ENCODE measurements at regions of chr14 and their contacts with region 1.

Region 1: DNA sequence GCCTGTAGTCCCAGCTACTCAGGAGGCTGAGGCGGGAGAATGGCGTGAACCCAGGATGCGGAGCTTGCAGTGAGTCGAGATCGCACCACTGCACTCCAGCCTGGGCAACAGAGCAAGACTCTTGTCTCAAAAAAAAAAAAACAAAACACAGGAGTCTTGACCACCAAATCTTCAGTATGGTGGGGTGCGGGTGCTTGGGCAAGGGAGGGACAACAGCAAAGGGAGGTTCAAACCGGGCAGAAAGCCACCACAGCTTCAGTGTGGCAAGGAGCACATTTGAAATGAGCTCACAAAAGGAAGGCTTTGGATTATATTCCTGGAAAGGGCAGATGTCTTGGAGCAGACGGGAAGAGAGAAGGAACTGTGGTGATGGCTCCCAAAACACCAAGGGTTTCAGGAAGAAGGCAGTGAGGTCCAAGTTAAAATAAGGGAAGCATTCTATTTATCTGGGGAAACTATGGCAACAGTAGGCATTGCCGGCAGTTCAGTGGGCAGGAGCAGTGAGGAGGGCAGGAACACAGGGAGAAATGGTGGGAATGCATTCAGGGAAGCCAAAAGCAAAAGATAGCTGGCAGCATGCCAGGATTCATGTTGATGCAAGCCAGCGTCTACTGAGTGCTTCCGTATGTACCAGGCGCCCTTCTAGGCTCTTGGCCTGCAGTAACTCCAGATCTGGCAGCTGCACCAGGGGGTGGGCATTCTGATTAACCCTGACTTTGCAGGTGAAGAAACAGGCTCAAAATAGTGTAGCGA is 51.0 kb upstream of the SRSF5 start:
- DNase-seq: no peak
- H3K4me3 ChIP-seq: no peak overlapping the region
- H3K27ac ChIP-seq: no peak overlapping the region
- H3K4me1 ChIP-seq: peaks cover 16 to 39% (median 31%) of the 10 kb centered on the region in 4 experiments
- H3K27me3 ChIP-seq: no peaks in the 10 kb centered on the region
- CTCF ChIP-seq: no peak
- EP300 ChIP-seq: no peak
- POLR2A ChIP-seq: no peak
- RAD21 ChIP-seq: no peak

Region 2: DNA sequence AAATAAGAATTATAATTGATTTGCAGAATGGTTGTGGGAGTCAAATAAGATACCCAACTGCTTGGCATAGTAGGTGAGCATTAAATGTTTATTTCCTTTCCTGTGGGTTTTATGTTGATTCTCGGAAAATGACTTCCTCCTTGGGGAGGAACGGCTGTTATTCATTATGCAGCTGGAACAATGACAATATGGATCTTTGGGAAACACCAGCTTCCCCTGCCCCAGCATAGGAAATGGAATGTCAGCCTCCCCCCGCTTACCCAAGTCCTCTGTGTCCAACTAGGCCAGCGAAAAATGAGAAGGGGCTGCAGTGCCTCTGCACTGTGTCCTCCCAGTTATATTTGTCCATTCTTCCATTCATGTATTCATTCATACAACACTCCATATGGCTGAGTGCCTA is 129.5 kb before region 1 on chr14:
- CTCF ChIA-PET with region 1: interaction called, 24 read pairs
- POLR2A ChIA-PET with region 1: no interaction called
- DNase-seq: no peak
- H3K4me3 ChIP-seq: no peak overlapping the region
- H3K27ac ChIP-seq: no peak overlapping the region
- H3K4me1 ChIP-seq: no peaks in the 10 kb centered on the region; a peak in 1 of 7 replicates
- H3K27me3 ChIP-seq: no peaks in the 10 kb centered on the region
- CTCF ChIP-seq: no peak
- EP300 ChIP-seq: no peak
- POLR2A ChIP-seq: no peak
- RAD21 ChIP-seq: no peak

Region 3: GRCh38 chr14:69605738-69606137 is 110.2 kb before region 1 on chr14:
- CTCF ChIA-PET with region 1: interaction called, 45 read pairs
- POLR2A ChIA-PET with region 1: no interaction called
- DNase-seq: no peak
- H3K4me3 ChIP-seq: no peak overlapping the region
- H3K27ac ChIP-seq: no peak overlapping the region
- H3K4me1 ChIP-seq: peaks cover 0 to 11% (median 7%) of the 10 kb centered on the region in 4 experiments; a peak in 5 of 7 replicates
- H3K27me3 ChIP-seq: no peaks in the 10 kb centered on the region
- CTCF ChIP-seq: no peak
- EP300 ChIP-seq: no peak
- POLR2A ChIP-seq: no peak
- RAD21 ChIP-seq: no peak

Region 4: GRCh38 chr14:69696633-69697557 is 19.0 kb before region 1 on chr14:
- CTCF ChIA-PET with region 1: interaction called, 12 read pairs
- POLR2A ChIA-PET with region 1: interaction called, 3 read pairs
- DNase-seq: no peak
- H3K4me3 ChIP-seq: no peak overlapping the region
- H3K27ac ChIP-seq: no peak overlapping the region
- H3K4me1 ChIP-seq: peaks cover 5 to 25% (median 12%) of the 10 kb centered on the region in 4 experiments; a peak in 4 of 7 replicates
- H3K27me3 ChIP-seq: no peaks in the 10 kb centered on the region
- CTCF ChIP-seq: no peak
- EP300 ChIP-seq: no peak
- POLR2A ChIP-seq: no peak
- RAD21 ChIP-seq: no peak

Measured in H1 (cell line).